Posterior vena cava (tissue), 2 donors: ENCODE measurements at regions of chrX and their contacts with region 1.

Region 1: DNA sequence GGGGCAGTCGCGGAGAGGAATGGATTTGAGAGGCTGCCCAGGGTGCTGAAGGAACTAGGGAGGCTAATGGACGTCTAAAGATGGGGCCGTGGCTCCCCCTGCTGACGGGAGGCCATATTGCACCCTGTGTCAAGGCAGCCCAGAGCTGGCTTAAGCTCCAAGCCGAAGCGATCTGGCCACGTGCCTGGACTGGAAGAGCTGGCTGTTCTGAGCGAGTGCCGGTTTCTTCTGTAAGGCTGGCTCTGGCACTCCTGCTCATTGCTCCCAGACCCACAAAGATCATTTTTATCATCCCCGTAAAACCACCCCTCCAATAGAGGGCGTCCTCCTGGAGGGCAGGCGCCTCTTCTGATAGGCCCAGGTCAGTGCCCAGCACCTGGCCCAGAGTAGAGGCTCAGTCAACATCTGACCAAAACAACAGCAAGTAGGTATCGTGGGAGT is 5.6 kb downstream of the PNCK start:
- DNase-seq: peak; percentile 96

Region 2: DNA sequence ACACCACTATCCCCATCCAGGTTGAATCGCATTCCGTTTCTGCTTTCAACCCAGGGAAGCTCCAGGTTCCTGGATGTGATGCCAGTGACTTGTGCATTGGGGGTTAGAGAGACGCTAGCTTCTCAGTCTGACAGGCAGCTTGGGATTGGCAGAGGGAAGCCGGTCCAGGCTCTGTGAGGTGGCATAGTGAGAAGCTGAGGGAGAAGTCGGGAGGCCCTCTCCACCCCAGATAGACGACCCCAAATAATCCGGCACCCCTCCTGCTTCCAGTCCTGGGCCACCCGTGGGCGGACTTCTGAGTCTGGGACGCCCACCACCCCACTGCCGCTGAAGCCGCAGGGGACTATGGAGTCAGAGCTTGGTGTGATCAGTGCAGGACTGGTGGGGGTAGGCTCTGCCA is 1747.9 kb before region 1 on chrX:
- intact Hi-C with region 1: no loop called
- DNase-seq: no peak

Region 3: DNA sequence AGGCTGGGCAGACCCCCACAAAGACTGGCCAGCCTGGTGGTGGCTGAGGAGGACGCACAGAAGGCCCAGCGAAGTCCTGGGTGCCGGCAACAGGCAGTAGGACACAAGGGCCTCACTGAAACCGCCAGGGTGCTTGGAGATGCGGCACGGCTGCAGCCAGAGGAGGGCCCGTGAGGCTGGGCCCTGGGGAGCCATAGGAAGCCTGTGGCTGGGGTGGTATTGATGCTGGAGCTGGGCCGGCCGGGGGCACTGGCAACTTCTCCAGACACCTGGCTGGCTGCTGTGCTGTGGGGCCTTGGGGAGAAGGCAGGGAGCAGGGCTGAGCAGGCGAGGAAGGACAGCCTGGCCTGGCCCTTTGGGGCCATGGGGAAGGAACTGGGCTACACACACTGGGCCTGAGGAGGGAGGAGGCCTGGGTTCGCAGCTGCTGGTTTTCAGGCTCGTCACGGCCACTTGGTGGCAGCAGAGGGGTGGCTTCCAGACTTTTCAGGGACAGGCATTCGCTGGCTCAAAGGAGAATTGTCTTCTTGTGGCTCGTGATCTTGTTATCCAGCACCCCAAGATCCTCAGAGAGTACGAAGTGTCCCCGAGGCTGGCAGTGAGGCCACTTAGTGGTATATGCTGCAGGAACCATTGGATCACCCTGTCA is 113.3 kb before region 1 on chrX:
- intact Hi-C with region 1: loop called in 1 of 2 experiments (anchors 10 kb)
- DNase-seq: peak; percentile 89

Region 4: GRCh38 chrX:155086202-155086840 is 1418.3 kb after region 1 on chrX:
- intact Hi-C with region 1: loop called in 1 of 2 experiments (anchors 5 kb)
- DNase-seq: no peak